ENCODE measurements at regions of chr22 and their contacts with region 1.

Region 1: GRCh38 chr22:47883757-47884156 is 1121.3 kb downstream of the TBC1D22A start:
- DNase-seq: no peak
- H3K4me3 ChIP-seq: no peak overlapping the region
- H3K27ac ChIP-seq: no peak overlapping the region
- H3K4me1 ChIP-seq: no peaks in the 10 kb centered on the region
- H3K27me3 ChIP-seq: peaks cover 0 to 14% (median 0%) of the 10 kb centered on the region in 3 donors
- CTCF ChIP-seq: no peak
- EP300 ChIP-seq: no peak
- POLR2A ChIP-seq: no peak

Region 2: GRCh38 chr22:47691152-47691895 is 192.4 kb before region 1 on chr22:
- intact Hi-C with region 1: no loop called
- DNase-seq: no peak
- H3K4me3 ChIP-seq: no peak overlapping the region
- H3K27ac ChIP-seq: no peak overlapping the region
- H3K4me1 ChIP-seq: no peaks in the 10 kb centered on the region
- H3K27me3 ChIP-seq: peaks cover 0 to under 1% (median 0%) of the 10 kb centered on the region in 3 donors
- CTCF ChIP-seq: no peak
- EP300 ChIP-seq: no peak
- POLR2A ChIP-seq: no peak

Region 3: DNA sequence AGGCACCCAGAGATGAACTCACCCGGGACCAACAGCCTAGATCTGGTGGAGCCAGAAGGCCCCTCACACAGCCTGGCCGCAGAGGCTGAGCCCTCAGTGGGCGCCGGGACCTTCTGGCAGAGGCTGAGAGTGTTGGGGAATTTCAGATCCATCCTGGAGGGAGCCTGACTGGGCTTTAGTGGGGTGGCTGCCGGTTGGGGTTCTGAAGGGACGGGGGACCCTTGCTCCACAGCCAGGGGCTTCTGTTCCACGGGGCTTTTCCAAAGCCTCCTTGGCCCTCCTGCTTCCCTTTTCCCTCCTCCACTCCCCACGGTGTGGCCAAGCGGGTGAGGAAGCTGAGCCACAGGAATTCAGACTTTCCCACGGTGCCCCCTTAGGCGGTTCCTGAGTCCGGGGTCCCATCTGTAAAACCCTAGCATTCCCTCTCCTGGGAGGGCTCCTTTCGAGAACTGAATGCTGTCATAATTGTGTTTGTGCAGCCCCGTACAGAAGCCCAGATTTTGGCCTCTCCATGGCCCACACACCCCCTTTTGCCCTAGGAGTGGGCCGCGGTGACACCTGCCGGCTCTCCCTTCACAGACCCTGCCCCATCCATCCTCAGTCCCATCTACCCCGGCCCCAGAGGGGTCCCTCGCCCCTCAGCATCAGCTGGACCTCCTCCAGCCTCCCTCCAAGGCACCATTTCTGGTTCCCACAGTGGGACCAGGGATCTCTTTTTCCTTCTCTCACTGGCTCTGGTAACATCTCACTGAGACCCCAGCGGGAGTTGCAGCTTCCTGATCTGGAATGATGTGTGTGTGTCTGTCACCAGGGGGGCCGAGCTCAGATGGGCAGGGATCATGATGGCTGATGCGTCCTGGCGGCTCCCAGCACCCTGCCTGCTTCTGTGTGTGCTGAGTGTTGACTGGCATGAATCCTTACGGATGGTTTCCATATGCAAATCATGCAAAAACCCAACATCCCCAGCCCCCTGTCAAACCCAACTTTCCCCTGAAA is 73.0 kb before region 1 on chr22:
- intact Hi-C with region 1: no loop called
- DNase-seq: no peak
- H3K4me3 ChIP-seq: no peak overlapping the region
- H3K27ac ChIP-seq: no peak overlapping the region
- H3K4me1 ChIP-seq: no peaks in the 10 kb centered on the region
- H3K27me3 ChIP-seq: peaks cover 0 to 34% (median 3%) of the 10 kb centered on the region in 3 donors
- CTCF ChIP-seq: no peak
- EP300 ChIP-seq: no peak
- POLR2A ChIP-seq: no peak

Region 4: GRCh38 chr22:47918276-47918921 is 34.6 kb after region 1 on chr22:
- intact Hi-C with region 1: no loop called
- DNase-seq: peak in 1 of 2 donors; percentile 31
- H3K4me3 ChIP-seq: no peak overlapping the region
- H3K27ac ChIP-seq: no peak overlapping the region
- H3K4me1 ChIP-seq: no peaks in the 10 kb centered on the region
- H3K27me3 ChIP-seq: peaks cover 0 to 9% (median 0%) of the 10 kb centered on the region in 3 donors
- CTCF ChIP-seq: no peak
- EP300 ChIP-seq: no peak
- POLR2A ChIP-seq: no peak

Region 5: DNA sequence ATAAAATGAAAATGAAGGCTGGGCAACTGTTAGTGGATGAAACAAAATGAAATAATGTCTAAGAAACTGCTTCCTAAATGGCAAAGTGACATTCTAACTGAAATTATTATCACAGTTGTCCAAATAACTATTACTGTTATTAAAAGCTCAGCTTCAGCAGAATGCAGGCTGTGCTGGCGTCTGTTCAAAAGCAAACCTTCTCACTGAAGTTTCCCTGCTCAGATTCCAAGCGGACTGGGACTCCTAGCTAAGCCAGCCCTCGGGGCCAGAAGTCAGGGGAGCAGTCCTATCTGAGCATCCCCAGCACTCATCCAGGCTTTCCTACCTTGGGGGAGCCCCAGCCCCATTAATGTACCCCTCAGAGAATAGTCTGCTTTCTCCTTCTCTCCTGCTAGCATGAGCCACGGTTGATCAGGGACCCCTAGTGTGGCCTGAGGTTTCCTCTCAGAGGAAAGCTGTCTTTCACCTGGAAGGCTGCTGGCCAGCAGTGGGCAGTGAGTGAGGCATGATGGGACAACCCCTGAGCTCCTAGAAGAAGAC is 46.0 kb after region 1 on chr22:
- intact Hi-C with region 1: loop called (anchors 5 kb)
- DNase-seq: no peak
- H3K4me3 ChIP-seq: no peak overlapping the region
- H3K27ac ChIP-seq: no peak overlapping the region
- H3K4me1 ChIP-seq: no peaks in the 10 kb centered on the region
- H3K27me3 ChIP-seq: peaks cover 0 to 11% (median 0%) of the 10 kb centered on the region in 3 donors
- CTCF ChIP-seq: no peak
- EP300 ChIP-seq: no peak
- POLR2A ChIP-seq: no peak